Transverse colon (tissue), 4 donors: ENCODE measurements at regions of chr1 and their contacts with region 1.

Region 1: GRCh38 chr1:56584910-56585528 is 5.7 kb upstream of the PLPP3 start:
- DNase-seq: no peak
- H3K4me3 ChIP-seq: no peak overlapping the region
- H3K27ac ChIP-seq: no peak overlapping the region
- H3K4me1 ChIP-seq: peaks cover 0 to 4% (median 2%) of the 10 kb centered on the region in 4 donors
- H3K27me3 ChIP-seq: no peaks in the 10 kb centered on the region
- CTCF ChIP-seq: peak; percentile 71 to 90 (median 85)
- EP300 ChIP-seq: no peak
- POLR2A ChIP-seq: no peak

Region 2: GRCh38 chr1:55284852-55285251 is 1300.2 kb before region 1 on chr1:
- in situ Hi-C with region 1: loop called (anchors 10 kb)
- intact Hi-C with region 1: loop called (anchors 2 kb)
- DNase-seq: no peak
- H3K4me3 ChIP-seq: no peak overlapping the region
- H3K27ac ChIP-seq: no peak overlapping the region
- H3K4me1 ChIP-seq: peaks cover 0 to 4% (median 0%) of the 10 kb centered on the region in 4 donors
- H3K27me3 ChIP-seq: no peaks in the 10 kb centered on the region
- CTCF ChIP-seq: peak; percentile 47 to 62 (median 50)
- EP300 ChIP-seq: no peak
- POLR2A ChIP-seq: no peak

Region 3: GRCh38 chr1:55375617-55376258 is 1209.3 kb before region 1 on chr1:
- in situ Hi-C with region 1: loop called in 1 of 4 experiments (anchors 10 kb)
- intact Hi-C with region 1: loop called (anchors 10 kb)
- DNase-seq: peak; percentile 30
- H3K4me3 ChIP-seq: no peak overlapping the region
- H3K27ac ChIP-seq: peak overlapping the region in 2 of 4 donors; percentile 5 to 36
- H3K4me1 ChIP-seq: no peaks in the 10 kb centered on the region
- H3K27me3 ChIP-seq: no peaks in the 10 kb centered on the region
- CTCF ChIP-seq: peak; percentile 84 to 93 (median 92)
- EP300 ChIP-seq: no peak
- POLR2A ChIP-seq: no peak

Region 4: DNA sequence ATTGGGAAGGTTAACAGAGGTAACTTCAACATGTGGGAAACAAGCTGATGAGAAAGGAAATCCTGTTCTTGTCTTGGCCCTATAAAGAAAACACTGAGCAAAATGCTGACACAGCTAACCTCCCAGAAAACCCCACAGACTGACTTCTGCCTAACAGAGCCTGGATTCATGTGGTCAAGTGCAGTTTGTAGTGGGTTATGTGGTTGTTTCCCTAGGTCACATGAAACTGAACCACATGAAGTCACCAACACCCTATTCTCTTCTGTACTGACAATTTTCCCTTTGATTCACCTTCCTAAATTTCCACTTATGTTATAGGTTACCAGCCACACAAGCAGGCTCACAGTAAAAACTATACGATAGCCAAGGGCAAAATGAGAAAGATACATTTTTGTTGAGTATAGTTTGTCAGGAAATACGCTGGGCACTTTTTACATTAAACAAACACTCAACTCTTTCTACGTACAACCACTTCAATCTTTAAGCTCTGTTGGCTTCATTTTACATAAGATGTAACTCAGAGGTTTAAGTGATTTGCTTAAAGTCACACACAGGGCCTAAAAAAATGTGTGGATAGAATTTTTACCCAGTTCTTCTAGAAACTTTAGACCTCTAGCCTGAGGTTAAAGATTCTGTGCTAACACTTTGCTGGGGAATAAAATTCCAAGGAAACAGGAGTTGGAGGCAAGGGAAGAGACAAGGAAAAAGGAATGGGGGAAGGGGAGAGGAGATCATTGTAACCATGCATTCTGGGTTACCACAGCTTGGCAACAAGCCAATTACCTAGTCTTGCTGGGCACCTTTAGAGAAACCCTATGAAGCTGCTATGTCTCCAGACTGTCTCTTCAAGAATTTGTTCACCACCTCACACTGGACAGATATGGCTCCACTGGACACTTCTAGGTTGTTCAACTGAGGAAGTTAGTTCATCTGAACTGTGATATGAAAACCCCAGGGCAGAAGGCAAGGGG is 768.3 kb before region 1 on chr1:
- in situ Hi-C with region 1: no loop called
- intact Hi-C with region 1: no loop called
- DNase-seq: no peak
- H3K4me3 ChIP-seq: no peak overlapping the region
- H3K27ac ChIP-seq: no peak overlapping the region
- H3K4me1 ChIP-seq: peaks cover 0 to 3% (median 0%) of the 10 kb centered on the region in 4 donors
- H3K27me3 ChIP-seq: no peaks in the 10 kb centered on the region
- CTCF ChIP-seq: no peak
- EP300 ChIP-seq: no peak
- POLR2A ChIP-seq: no peak

Region 5: DNA sequence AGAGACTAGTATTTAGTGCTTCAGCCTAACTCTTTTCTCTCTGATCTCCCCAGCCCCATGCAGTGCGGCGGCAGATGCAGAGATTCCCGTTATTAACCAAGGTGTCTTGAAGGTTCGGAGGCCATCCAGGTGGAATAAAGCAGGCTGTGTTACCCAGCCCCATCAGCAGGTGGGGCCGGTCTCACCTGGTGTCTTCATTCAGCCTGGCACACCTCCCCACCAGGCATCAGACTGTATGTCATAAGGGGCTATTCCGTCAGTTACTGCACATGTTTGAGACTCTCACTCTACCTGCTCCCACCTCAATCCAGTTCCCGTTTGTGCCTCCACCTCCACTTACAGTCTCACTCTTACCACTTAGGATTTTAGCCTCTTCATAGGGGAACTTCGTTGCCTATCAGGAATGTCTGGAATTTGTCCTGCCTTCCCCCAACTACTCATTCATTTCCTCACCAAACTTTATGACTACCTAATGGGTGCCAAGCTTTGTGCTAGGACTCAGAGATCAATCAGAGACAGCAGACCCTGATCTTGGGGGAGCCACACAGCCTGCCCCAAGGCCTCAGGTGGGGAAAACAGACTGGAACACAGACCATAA is 175.8 kb before region 1 on chr1:
- in situ Hi-C with region 1: loop called in 3 of 4 experiments (anchors 10 to 25 kb)
- intact Hi-C with region 1: no loop called
- DNase-seq: peak; percentile 72
- H3K4me3 ChIP-seq: no peak overlapping the region
- H3K27ac ChIP-seq: no peak overlapping the region
- H3K4me1 ChIP-seq: peaks cover 0 to 7% (median 2%) of the 10 kb centered on the region in 4 donors
- H3K27me3 ChIP-seq: no peaks in the 10 kb centered on the region
- CTCF ChIP-seq: peak; percentile 41 to 75 (median 60)
- EP300 ChIP-seq: no peak
- POLR2A ChIP-seq: no peak

Region 6: DNA sequence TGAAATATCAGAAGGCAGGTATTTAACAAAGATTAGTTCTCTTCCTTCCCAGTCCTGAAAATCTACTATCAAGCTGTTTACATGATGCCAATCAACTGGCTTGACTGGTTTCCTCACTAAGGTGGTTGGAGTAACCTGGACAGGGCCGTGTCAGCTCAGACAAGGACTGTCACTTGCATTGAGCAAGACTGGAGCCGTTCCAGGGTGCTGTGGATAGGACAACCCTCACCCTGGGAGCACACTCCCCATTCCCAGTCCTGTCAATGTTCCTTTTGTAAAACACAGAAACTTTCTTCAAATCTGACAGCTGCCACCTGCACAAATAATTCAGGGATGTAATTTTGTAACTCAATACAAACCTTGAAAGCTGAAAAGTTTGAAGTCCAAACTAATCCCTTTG is 37.1 kb before region 1 on chr1:
- in situ Hi-C with region 1: no loop called
- intact Hi-C with region 1: no loop called
- DNase-seq: peak; percentile 33
- H3K4me3 ChIP-seq: no peak overlapping the region
- H3K27ac ChIP-seq: no peak overlapping the region
- H3K4me1 ChIP-seq: peaks cover 0 to 23% (median 5%) of the 10 kb centered on the region in 4 donors
- H3K27me3 ChIP-seq: no peaks in the 10 kb centered on the region
- CTCF ChIP-seq: no peak
- EP300 ChIP-seq: no peak
- POLR2A ChIP-seq: no peak

Region 7: GRCh38 chr1:56626546-56626945 is 41.5 kb after region 1 on chr1:
- in situ Hi-C with region 1: no loop called
- intact Hi-C with region 1: no loop called
- DNase-seq: no peak
- H3K4me3 ChIP-seq: no peak overlapping the region
- H3K27ac ChIP-seq: no peak overlapping the region
- H3K4me1 ChIP-seq: no peaks in the 10 kb centered on the region
- H3K27me3 ChIP-seq: no peaks in the 10 kb centered on the region
- CTCF ChIP-seq: no peak
- EP300 ChIP-seq: no peak
- POLR2A ChIP-seq: no peak

Region 8: DNA sequence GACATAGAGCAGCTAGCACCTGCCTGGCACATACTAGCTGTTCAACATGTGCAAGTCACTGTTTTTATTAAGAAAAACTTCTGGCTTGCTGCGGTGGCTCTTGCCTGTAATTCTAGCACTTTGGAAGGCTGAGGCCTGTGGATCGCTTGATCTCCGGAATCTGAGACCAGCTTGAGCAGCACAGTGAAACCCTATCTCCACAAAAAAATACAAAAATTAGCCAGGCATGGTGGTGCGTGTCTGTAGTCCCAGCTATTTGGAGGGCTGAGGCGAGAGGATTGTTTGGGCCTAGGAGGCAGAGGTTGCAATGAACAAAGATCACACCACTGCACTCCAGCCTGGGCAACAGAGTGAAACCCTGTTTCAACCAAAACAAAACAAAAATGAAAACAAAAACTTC is 408.5 kb after region 1 on chr1:
- in situ Hi-C with region 1: no loop called
- intact Hi-C with region 1: no loop called
- DNase-seq: no peak
- H3K4me3 ChIP-seq: no peak overlapping the region
- H3K27ac ChIP-seq: no peak overlapping the region
- H3K4me1 ChIP-seq: no peaks in the 10 kb centered on the region
- H3K27me3 ChIP-seq: no peaks in the 10 kb centered on the region
- CTCF ChIP-seq: no peak
- EP300 ChIP-seq: no peak
- POLR2A ChIP-seq: no peak